BJ (cell line): ENCODE measurements at regions of chr6 and their contacts with region 1.

Region 1: GRCh38 chr6:116268589-116269293 is 11.0 kb downstream of the TSPYL1 start:
- DNase-seq: peak; percentile 29
- H3K4me3 ChIP-seq: no peak overlapping the region
- H3K27me3 ChIP-seq: no peaks in the 10 kb centered on the region
- CTCF ChIP-seq: peak; percentile 85

Region 2: DNA sequence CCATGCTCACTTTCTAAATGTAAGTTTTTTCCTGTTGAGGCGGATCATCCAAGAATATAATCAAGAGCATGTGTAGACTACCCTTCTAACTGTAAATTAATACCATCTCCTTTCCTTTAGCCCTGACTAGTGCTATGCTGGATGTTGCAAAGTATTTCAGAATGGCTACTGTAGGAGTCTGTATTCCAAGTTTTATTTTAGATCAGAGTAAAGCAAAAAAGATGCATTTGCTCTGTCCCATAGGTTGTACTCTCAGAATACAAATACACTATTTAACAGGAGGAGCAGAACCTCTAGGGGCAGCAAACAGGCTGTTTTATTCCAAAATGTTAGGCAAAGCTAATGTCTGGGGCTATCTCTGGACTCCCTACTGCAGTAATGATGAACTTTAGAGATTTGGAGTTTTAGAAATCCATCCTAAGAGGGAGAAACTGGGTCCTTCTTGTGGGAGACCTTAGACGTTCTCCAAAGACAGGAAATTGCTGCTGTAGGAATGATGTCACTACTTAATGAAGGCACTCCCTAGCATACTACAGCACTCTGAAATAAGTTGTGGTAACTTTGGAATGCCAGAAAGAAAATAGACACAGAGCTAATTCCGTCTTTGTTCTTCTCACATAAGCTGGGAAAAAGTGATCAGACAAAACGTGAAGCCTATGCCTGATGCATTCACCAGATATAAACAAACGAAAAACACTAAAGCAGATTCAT is 1533.6 kb before region 1 on chr6:
- CTCF ChIA-PET with region 1: no interaction called
- POLR2A ChIA-PET with region 1: no interaction called
- DNase-seq: no peak
- H3K4me3 ChIP-seq: no peak overlapping the region
- H3K27me3 ChIP-seq: no peaks in the 10 kb centered on the region
- CTCF ChIP-seq: no peak

Region 3: GRCh38 chr6:116217069-116217468 is 51.7 kb before region 1 on chr6:
- CTCF ChIA-PET with region 1: interaction called, 48 read pairs
- POLR2A ChIA-PET with region 1: interaction called, 6 read pairs
- DNase-seq: no peak
- H3K4me3 ChIP-seq: no peak overlapping the region
- H3K27me3 ChIP-seq: no peaks in the 10 kb centered on the region
- CTCF ChIP-seq: peak; percentile 49

Region 4: GRCh38 chr6:116279260-116280063 is 10.7 kb after region 1 on chr6 and contains the start of gene TSPYL1:
- CTCF ChIA-PET with region 1: interaction called, 28 read pairs
- POLR2A ChIA-PET with region 1: no interaction called
- DNase-seq: peak; percentile 85
- H3K4me3 ChIP-seq: peak within 1 kb of the TSS; percentile 86
- H3K27me3 ChIP-seq: no peaks in the 10 kb centered on the region
- CTCF ChIP-seq: peak; percentile 20; the same call in 1 of the 2 replicates
- polyA plus RNA-seq, gene TSPYL1: 31.9 and 43.1 TPM in 2 replicates

Region 5: DNA sequence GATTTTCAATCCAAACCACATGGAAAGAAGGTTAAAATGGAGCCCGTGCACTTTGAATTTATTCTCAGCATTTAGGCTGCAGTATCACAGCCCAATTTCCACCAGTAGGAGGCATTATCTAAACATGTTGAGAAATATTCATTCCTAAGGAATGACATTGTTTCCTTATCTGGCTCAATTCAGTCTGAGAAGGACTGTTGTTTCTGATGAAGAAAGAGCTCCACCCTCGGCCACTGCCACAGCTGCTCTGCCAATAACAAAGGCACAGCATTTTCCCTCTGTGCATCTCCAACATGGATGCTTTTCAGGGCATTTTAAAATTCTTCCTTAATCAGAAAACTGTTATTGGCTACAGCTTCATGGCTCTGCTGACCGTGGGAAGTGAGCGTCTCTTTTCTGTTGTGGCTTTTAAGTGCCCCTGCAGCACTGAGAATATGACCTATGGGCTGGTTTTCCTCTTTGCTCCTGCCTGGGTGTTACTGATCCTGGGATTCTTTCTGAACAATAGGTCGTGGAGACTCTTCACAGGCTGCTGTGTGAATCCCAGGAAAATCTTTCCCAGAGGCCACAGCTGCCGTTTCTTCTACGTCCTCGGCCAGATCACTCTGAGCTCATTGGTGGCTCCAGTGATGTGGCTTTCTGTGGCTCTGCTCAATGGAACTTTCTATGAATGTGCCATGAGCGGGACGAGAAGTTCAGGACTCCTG is 242.8 kb after region 1 on chr6 and contains the start of gene CALHM5:
- CTCF ChIA-PET with region 1: interaction called, 14 read pairs
- POLR2A ChIA-PET with region 1: no interaction called
- DNase-seq: peak; percentile 58
- H3K4me3 ChIP-seq: peak within 1 kb of the TSS; percentile 46
- H3K27me3 ChIP-seq: no peaks in the 10 kb centered on the region
- CTCF ChIP-seq: peak; percentile 68
- polyA plus RNA-seq, gene CALHM5: 4.4 and 6.6 TPM in 2 replicates

Region 6: DNA sequence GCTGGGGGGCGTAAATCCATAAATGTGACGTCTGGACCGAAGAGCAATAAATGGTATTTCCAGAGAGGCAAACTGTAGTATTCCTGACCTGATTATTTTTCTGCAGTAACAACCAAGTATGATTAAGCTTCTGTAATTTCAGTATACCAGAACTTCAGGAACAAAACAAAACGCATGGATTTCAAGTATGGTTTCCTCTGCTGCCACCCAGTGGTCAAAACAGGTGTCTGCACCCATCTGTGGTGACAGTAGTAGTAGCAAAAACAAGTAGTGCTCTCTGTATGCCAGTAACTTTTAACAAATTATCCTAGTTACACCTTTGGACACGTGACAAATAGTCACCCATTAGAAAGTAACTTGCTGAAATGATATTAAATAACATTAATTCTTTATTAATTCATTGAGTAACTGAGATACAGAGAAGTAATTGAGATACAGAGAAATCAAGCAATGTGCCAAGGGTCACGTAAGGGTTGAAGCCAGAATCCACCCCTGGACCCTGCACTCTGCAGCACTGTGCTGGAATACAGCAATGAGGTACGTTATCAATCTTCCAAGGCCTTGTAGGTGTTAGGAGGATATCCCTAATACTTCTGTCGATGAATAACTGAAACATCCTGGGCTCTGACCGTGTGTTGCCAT is 292.8 kb after region 1 on chr6:
- CTCF ChIA-PET with region 1: interaction called, 93 read pairs
- POLR2A ChIA-PET with region 1: no interaction called
- DNase-seq: no peak
- H3K4me3 ChIP-seq: no peak overlapping the region
- H3K27me3 ChIP-seq: no peaks in the 10 kb centered on the region
- CTCF ChIP-seq: peak; percentile 77